ENCODE measurements at regions of chr22 and their contacts with region 1.

Region 1: DNA sequence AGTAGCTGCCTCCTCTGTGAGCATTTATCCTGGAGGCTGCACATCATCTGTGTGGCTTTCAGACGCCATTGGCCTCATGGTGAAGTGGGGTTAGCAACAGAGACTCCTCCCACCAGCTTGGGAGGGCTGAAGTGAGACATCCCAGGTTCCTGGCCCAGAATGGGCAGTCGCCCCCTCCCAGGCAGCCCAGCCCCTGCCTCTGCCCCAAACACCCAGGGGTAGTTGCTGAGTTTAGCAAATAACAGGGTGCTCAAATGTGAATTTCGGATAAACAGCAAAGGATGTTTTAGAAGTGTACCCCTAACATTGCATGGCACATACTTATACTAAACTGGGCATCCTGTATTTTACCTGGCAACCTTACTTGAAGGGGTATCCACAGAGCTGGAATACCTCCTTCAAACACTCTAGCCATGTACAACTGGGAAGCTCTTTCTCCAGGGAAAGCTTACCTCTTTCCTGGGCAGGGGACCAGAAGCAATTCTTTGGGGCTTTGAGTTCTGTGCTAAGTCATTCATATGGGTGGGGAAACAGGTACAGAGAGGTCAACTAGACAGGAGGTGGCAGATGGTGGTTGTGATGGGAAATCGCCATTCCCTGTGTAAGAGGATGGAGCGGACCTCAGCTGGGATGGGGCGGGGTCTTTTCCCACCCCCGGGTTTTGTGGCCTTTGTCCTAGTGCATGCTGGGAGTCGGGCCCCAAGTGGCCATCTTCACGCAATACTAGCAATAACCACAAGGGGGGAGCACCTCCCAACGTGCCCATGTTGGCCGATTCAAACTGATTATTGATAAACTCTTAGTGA is 19.3 kb downstream of the MTFP1 start:
- DNase-seq: no peak
- H3K4me3 ChIP-seq: no peak overlapping the region
- H3K27ac ChIP-seq: no peak overlapping the region
- H3K27me3 ChIP-seq: peaks cover 4% of the 10 kb centered on the region
- CTCF ChIP-seq: peak; percentile 70

Region 2: DNA sequence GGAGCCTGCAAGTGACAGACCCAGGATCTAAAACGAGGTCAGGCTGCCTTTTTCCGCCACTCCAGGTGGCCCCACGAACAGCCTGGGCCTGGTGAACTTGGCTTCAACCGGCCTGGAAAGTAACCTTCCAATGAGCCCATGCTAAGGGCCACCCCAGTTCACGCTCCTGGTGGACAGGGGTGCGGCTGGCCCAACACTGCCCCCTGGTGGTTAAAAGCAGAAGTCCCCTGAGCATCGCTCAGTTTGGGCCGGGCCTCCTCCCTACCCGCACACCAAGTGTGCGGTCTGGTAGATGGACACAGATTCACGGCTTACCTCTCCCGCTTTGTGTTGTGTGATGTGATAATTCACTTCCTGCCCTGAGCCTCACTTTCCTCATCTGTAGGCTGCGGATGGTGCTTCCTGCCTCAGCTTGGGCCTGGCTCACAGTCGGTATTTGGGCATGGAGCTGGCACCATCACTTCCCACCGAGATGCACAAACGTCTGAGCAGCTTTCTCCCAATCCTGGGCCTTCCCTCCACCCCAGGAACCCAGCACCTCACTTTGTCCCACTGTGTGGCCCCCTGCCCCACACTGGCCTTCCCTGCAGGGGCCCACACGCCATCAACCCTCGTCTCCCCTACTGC is 40.6 kb after region 1 on chr22:
- CTCF ChIA-PET with region 1: interaction called, 30 read pairs
- POLR2A ChIA-PET with region 1: no interaction called
- DNase-seq: peak; percentile 8
- H3K4me3 ChIP-seq: no peak overlapping the region
- H3K27ac ChIP-seq: no peak overlapping the region
- H3K27me3 ChIP-seq: peaks cover 6% of the 10 kb centered on the region
- CTCF ChIP-seq: peak; percentile 86